ENCODE measurements at regions of chr10 and their contacts with region 1.

Region 1: GRCh38 chr10:77400033-77400432 is 237.6 kb downstream of the KCNMA1 start:
- DNase-seq: no peak
- H3K4me3 ChIP-seq: no peak overlapping the region
- H3K27ac ChIP-seq: no peak overlapping the region
- H3K4me1 ChIP-seq: no peaks in the 10 kb centered on the region
- H3K27me3 ChIP-seq: no peaks in the 10 kb centered on the region
- CTCF ChIP-seq: no peak
- EP300 ChIP-seq: no peak
- POLR2A ChIP-seq: no peak

Region 2: DNA sequence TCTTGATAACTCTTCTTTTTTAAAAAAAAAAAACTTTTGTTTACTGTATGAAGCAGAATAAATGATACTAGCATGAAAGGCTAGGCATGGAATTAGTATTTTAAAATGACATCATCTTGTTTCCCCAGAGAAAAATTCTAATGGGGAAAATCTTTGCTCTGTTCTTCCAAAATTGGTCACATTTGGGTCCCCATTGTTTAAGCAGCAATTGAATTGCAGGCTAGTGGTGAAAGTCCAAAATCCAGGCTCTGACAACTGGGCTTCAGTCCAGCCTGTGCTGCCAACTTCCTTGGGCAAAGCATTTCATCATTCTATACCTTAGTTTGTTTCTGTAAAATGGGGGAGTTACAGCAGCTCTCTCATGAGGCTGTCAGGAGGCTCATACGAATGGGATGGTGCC is 488.8 kb before region 1 on chr10:
- intact Hi-C with region 1: loop called in 1 of 4 experiments (anchors 5 kb)
- DNase-seq: no peak
- H3K4me3 ChIP-seq: no peak overlapping the region
- H3K27ac ChIP-seq: no peak overlapping the region
- H3K4me1 ChIP-seq: no peaks in the 10 kb centered on the region
- H3K27me3 ChIP-seq: no peaks in the 10 kb centered on the region
- CTCF ChIP-seq: no peak
- EP300 ChIP-seq: no peak
- POLR2A ChIP-seq: no peak

Region 3: DNA sequence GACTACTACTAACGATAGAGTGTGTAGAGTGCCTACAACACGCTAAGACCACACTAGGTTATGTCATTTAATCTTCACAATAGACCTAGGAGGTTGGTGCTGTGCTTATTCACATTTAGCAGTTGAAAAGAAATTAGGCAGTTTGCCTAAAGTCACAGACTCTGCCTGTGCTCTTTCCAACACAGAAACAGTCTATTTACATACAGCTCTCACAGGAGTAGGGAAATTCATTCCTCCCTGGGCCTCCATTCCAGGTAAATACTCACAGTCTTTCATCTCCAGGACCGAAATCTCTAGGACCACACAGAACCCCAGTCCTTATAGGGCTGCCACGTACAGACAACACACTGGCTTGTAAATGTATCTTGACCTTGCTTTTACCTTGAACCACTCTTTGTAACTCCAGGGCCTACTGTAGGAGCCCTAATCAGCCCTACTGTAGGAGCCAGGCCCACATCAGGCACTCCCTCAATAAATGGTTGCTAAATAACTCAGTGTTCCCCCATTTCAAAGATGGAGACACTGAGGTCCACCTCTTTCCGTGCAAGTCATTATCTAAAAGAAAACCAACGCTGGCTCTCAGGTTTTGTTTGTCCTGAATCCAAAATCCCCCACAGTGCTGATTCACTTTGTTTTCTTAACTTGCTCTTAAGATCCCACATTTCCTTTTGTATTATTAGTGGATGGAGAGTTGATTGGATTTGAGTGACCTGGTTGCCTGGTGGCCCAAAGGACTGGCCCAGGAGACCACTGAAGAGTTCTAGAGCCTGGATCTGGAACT is 90.7 kb after region 1 on chr10:
- intact Hi-C with region 1: no loop called
- DNase-seq: no peak
- H3K4me3 ChIP-seq: no peak overlapping the region
- H3K27ac ChIP-seq: no peak overlapping the region
- H3K4me1 ChIP-seq: no peaks in the 10 kb centered on the region
- H3K27me3 ChIP-seq: no peaks in the 10 kb centered on the region
- CTCF ChIP-seq: no peak
- EP300 ChIP-seq: no peak
- POLR2A ChIP-seq: no peak

Measured in ovary (tissue), 10 donors.